MCF 10A (cell line): ENCODE measurements at regions of chr5 and their contacts with region 1.

Region 1: GRCh38 chr5:53362521-53362941 is 117.9 kb upstream of the FST start:
- DNase-seq: peak; percentile 87
- H3K4me3 Mint-ChIP-seq: no peak overlapping the region
- H3K27ac Mint-ChIP-seq: peak overlapping the region; percentile 74
- H3K4me1 Mint-ChIP-seq: peaks cover 10% of the 10 kb centered on the region
- H3K27me3 Mint-ChIP-seq: no peaks in the 10 kb centered on the region
- CTCF ChIP-seq: no peak

Region 2: DNA sequence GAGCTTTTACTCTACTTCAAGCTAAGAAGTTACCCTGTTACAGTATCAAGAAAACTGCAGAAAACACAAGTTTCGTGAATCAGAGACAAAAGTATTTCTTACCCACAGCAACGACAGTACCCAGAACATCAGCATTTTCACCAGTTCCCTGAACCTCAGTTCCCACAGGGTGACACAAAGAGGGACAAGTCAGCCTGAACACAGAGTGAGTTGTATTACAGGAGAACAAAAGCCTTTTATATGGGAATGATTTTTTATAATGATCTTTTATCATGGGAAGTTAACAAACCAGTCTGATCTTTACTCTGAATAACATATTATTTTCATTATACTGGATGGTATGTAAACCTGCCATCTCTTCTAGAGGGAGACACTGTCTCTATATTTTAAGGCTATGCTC is 713.8 kb before region 1 on chr5:
- CTCF ChIA-PET with region 1: no interaction called
- POLR2A ChIA-PET with region 1: no interaction called
- intact Hi-C with region 1: no loop called
- DNase-seq: no peak
- H3K4me3 Mint-ChIP-seq: no peak overlapping the region
- H3K27ac Mint-ChIP-seq: no peak overlapping the region
- H3K4me1 Mint-ChIP-seq: no peaks in the 10 kb centered on the region
- H3K27me3 Mint-ChIP-seq: peaks cover 49% of the 10 kb centered on the region
- CTCF ChIP-seq: no peak

Region 3: DNA sequence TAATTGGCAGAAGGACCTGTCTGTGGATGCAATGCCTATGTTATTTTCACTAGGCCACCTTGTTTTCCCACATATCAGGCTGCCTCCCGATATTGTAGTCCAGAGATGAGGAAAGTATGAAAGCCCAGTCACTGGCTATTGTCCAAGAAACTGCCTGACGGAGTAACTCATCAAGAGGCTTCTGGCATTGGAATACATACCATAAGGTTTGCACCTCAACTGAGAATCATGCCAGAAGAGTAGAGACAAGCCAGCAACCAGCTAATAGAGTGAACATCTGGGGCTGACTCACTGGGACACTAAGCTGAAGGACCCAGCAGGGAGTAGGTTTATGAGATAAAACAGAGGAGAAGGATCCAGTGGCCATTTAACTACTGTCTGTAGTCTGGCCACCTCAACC is 19.3 kb before region 1 on chr5:
- CTCF ChIA-PET with region 1: interaction called, 3 read pairs
- POLR2A ChIA-PET with region 1: interaction called, 4 read pairs
- intact Hi-C with region 1: loop called (anchors 1 kb)
- DNase-seq: peak; percentile 96
- H3K4me3 Mint-ChIP-seq: no peak overlapping the region
- H3K27ac Mint-ChIP-seq: peak overlapping the region; percentile 39
- H3K4me1 Mint-ChIP-seq: peaks cover 29% of the 10 kb centered on the region
- H3K27me3 Mint-ChIP-seq: no peaks in the 10 kb centered on the region
- CTCF ChIP-seq: no peak

Region 4: GRCh38 chr5:53418844-53419646 is 56.5 kb after region 1 on chr5:
- CTCF ChIA-PET with region 1: interaction called, 4 read pairs
- POLR2A ChIA-PET with region 1: no interaction called
- intact Hi-C with region 1: loop called (anchors 2 kb)
- DNase-seq: peak; percentile 85
- H3K4me3 Mint-ChIP-seq: peak overlapping the region; percentile 21
- H3K27ac Mint-ChIP-seq: peak overlapping the region; percentile 98
- H3K4me1 Mint-ChIP-seq: peaks cover 28% of the 10 kb centered on the region
- H3K27me3 Mint-ChIP-seq: no peaks in the 10 kb centered on the region
- CTCF ChIP-seq: no peak